ENCODE measurements at regions of chr1 and their contacts with region 1.

Region 1: DNA sequence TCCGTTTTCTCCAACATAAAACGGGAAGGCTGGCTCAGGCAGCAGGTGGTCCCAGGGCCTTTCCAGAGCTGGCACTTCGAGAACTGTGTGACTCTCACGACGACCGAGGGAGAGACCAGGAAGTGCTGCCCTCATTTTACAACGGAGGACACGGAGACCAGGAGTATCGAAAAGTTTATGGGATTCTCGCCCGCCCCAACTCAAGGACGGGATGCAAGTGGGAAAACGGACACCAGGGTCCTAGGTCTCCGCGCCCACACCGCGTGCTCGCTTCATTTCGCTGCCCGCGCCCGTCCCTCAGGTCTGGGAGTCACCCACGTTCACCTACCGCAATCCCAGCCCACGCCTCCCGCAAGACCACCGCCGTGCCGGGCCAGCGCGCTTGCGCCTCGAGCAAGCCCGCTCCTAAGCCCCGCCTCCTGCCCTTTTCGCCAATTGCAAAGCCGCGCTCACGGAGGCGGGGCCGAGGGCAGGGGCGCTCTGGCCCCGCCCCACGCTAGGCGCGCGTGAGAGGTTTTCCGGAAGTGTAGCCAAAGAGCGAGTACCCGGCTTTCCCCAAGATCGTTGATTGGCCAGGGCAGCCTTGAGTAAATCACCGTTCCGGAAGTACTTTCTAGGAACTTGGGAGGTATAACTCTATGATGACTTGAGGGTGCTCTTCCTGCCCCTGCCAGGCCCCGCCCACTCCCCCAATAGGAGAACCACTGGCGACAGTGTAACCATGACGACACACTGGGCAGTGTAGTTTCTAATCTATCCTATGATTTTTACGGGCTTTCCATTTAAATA is at the start of gene PARS2:
- DNase-seq: peak; percentile 92 to 98 (median 96)

Region 2: DNA sequence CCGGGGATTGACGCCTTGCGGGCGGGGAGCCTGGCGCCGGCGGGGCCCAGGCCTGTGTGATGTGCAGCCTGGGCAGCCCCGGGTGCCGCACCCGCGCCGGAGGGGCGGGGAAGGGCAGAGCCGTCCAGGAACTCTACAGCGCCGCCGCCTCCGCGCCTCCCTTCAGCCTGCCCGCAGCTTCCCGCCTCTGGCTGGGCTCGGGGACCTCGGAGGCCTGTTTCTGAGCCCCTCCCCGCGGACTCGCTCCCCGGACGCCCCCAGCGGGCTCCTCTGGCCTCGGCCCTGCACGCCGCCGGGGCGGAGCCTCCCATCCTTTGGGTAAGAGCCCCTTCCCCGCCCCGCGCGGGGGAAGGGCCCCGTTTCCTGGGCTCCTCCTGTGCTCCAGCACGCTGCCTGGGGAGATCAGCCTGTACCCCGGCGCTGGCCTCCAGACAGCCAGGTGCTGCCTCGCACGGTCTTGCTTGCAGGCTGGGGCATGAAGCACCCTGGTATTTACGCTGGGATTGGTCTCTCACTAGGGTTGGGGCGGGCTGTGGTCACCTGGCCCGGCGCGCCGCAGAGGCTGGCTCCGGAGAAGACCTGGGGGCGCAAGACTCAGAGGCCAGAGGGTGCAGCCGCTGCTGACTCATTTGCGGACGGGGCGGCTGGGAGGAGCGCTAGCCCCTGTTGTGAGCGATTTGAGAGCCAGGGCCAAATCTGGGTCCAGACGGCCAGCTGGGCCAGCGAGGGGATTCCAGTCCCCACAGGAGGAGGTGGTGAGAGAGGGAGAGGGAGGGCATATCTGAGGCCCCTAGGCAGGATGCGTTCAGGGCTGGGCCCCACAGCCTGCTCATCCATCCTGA is 222.0 kb before region 1 on chr1:
- intact Hi-C with region 1: no loop called
- DNase-seq: peak in 40 of 42 donors; percentile 28 to 82 (median 60)

Region 3: GRCh38 chr1:54715493-54716298 is 48.6 kb before region 1 on chr1 and contains the start of gene TTC4:
- intact Hi-C with region 1: loop called (anchors 5 kb)
- DNase-seq: peak; percentile 60 to 96 (median 90)